ENCODE measurements at regions of chr9 and their contacts with region 1.

Region 1: GRCh38 chr9:131668439-131669268 is 71.2 kb downstream of the RAPGEF1 start:
- DNase-seq: peak; percentile 18 to 79 (median 46)
- ATAC-seq: peak; percentile 71 to 83
- H3K4me3 Mint-ChIP-seq: peak overlapping the region; percentile 60 to 89 (median 78)
- H3K27ac Mint-ChIP-seq: peak overlapping the region; percentile 92 to 99 (median 96)
- H3K4me1 Mint-ChIP-seq: peaks cover 38 to 95% (median 72%) of the 10 kb centered on the region in 4 donors
- H3K27me3 Mint-ChIP-seq: no peaks in the 10 kb centered on the region

Region 2: DNA sequence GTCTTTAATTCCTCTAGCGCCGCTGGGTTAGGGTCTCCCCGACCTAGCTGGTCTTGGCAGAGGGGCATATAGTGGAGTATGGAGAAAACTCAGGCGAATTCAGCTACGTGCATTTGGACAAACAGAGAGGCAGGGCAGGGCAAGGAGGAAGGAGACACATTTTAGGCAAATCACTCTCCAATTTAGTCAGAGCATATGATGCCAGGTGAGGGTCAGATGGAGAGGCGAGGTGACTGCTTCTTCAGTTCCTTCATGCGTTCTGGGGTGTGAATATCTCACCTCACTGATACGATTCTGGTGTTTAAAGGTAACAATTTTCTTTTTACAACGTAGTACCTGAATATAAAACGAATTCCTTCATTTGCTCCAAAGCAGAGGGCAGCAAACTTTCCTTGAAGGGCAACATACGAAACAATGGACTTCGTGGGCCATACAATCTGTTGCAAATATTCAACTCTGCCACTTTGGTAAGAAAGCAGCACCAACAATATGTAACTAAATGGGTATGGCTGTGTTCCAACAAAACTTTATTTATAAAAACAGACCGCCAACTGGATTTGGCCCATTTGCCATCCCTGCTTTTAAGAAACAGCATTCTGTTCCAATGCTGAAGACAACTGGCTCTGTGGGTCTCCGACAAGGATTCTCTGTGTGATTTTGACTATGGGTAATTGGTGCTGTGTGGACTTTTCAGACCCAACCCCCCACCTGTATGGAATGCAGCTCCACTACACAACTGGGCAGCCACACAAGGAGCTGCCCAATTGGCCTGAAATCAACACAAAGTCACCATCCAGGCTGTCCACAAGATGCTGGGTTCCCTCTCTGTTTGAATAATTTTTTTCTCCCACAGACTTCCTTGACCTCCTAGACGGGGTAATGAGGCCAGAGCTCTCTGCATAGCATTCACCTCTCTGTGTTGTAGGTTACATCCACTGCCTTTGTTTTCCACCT is 17.4 kb after region 1 on chr9:
- POLR2A ChIA-PET with region 1: no interaction called
- DNase-seq: no peak
- ATAC-seq: no peak
- H3K4me3 Mint-ChIP-seq: no peak overlapping the region
- H3K27ac Mint-ChIP-seq: peak overlapping the region in 5 of 10 donors; percentile 2 to 49 (median 23)
- H3K4me1 Mint-ChIP-seq: peaks cover 23 to 78% (median 58%) of the 10 kb centered on the region in 4 donors
- H3K27me3 Mint-ChIP-seq: no peaks in the 10 kb centered on the region

Region 3: GRCh38 chr9:131697097-131697496 is 28.4 kb after region 1 on chr9:
- POLR2A ChIA-PET with region 1: no interaction called
- DNase-seq: no peak
- ATAC-seq: no peak
- H3K4me3 Mint-ChIP-seq: no peak overlapping the region
- H3K27ac Mint-ChIP-seq: peak overlapping the region in 2 of 10 donors; percentile 68 to 72
- H3K4me1 Mint-ChIP-seq: peaks cover 55 to 98% (median 87%) of the 10 kb centered on the region in 4 donors
- H3K27me3 Mint-ChIP-seq: no peaks in the 10 kb centered on the region

Region 4: DNA sequence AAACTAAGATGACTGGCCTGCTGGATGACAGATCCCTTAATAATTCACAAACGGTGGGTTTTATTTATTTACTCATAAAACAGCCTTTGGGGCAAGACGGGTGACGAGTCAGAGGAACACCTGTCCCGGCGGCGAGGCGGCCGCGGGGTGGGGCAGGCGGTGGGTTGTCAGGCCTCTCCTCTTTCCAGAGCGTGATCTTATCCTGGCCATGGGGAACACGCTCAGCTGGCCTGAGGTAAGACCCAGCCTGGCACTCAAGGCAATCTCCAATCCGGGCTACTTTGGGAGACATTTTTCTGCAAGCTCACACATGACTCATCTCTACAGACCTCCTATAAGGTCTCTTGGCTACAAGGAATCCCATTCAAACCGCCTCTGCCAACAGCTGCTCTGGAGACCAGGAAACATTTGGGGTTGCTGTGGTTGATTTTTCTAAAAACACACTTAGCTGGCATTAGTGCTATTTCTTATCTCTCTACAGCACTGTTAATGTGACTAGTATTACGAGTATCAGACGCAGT is 64.9 kb after region 1 on chr9:
- POLR2A ChIA-PET with region 1: interaction called, 10 read pairs
- DNase-seq: peak in 2 of 10 donors; percentile 17 to 18
- ATAC-seq: peak in 1 of 2 donors; percentile 2
- H3K4me3 Mint-ChIP-seq: peak overlapping the region; percentile 71 to 85 (median 78)
- H3K27ac Mint-ChIP-seq: peak overlapping the region; percentile 85 to 95 (median 92)
- H3K4me1 Mint-ChIP-seq: peaks cover 56 to 91% (median 88%) of the 10 kb centered on the region in 4 donors
- H3K27me3 Mint-ChIP-seq: no peaks in the 10 kb centered on the region